ENCODE measurements at regions of chr2 and their contacts with region 1.

Region 1: DNA sequence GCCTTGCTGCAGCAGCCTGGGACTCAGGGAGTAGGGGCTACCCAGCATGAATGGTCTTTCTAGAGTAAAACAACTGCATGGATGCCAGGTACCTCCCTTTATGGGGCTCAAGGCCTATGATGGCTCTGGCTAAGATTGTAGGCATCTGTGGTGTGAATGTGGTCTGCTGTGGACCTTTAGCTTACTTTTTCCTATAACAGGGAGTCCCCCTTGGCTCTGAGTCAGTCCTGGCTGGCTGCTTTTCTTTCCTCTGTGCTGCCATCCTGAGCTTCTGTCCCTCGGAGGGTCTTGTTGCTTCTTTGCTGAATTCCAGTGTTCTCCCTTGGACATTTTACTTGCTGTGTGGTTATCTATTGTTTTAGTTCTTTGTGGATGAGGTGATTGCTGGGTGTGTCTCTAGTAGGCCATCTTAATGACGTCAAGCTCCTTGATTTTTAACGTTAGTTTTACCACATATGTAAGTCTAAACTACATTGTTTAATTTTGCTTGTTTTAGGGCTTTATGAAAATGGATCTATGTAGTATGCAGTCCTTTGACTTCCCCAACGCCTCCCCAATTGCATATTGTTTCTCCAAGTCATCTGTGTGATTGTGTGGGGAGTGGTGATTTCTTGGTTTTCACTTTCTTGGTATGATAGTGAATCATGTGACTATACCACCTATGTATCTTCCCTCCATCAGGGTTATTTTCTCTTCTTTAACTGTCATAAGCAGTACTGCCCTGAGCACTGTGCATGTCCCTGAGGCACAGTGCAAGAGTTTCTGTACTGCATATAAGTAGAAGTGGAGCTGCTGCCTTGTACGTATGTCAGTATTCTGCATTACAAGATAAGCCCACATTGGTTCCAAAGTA is 92.4 kb downstream of the NCK2 start:
- DNase-seq: no peak
- H3K4me3 Mint-ChIP-seq: peak overlapping the region; percentile 26
- H3K27ac Mint-ChIP-seq: peak overlapping the region; percentile 78
- H3K4me1 Mint-ChIP-seq: peaks cover 73% of the 10 kb centered on the region
- H3K27me3 Mint-ChIP-seq: no peaks in the 10 kb centered on the region

Region 2: GRCh38 chr2:105769504-105769903 is 67.6 kb before region 1 on chr2:
- intact Hi-C with region 1: loop called (anchors 1 kb)
- DNase-seq: no peak
- H3K4me3 Mint-ChIP-seq: peak overlapping the region; percentile 45
- H3K27ac Mint-ChIP-seq: peak overlapping the region; percentile 91
- H3K4me1 Mint-ChIP-seq: peaks cover 74% of the 10 kb centered on the region
- H3K27me3 Mint-ChIP-seq: no peaks in the 10 kb centered on the region

Region 3: DNA sequence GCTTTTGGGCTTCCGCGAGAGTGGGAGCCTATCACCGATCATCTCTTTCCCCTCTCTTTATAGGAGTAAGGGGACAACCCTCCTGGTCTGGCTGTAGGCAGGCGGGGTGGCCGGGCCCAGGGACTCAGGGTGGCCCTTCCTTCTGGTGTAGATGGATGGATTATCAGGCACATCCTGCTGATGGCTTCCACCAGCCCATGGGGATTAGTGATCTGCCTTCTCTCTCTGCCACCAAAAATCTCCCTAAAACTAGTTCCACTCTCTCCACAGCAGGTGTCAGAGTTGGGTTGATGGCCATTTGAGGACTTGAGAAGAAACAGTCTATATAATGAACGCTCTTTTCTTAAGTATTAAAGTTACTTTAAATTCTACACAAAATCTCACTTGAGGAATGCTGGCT is 54.9 kb before region 1 on chr2:
- intact Hi-C with region 1: no loop called
- DNase-seq: no peak
- H3K4me3 Mint-ChIP-seq: no peak overlapping the region
- H3K27ac Mint-ChIP-seq: peak overlapping the region; percentile 50
- H3K4me1 Mint-ChIP-seq: peaks cover 83% of the 10 kb centered on the region
- H3K27me3 Mint-ChIP-seq: no peaks in the 10 kb centered on the region

Region 4: DNA sequence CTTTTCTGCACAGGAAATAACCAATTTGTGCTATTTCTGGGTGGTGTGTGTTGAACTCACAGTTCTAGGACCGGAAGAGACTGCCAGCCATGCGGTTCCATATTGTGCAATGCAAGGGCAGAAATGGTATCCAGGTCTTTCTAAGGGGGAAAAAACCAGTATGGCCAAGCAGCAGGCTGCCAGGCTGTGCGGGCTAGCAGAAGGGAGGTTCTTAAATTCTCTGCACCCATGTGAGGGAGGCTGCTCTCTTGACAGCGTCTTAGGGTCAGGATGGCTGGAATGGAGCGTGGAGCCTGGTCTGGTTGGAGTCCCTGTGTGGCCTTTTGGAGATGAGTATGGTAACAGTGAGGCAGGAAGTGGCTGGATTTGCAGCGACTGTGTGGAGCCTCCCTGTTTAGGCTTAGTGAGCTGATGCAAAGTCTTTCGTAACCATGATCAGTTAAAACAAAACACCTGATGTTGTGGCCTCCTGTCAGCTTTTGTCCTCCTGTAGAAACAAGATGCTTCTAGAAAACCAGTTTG is 39.7 kb before region 1 on chr2:
- intact Hi-C with region 1: loop called (anchors 1 kb)
- DNase-seq: peak; percentile 48
- H3K4me3 Mint-ChIP-seq: peak overlapping the region; percentile 53
- H3K27ac Mint-ChIP-seq: peak overlapping the region; percentile 91
- H3K4me1 Mint-ChIP-seq: peaks cover 87% of the 10 kb centered on the region
- H3K27me3 Mint-ChIP-seq: no peaks in the 10 kb centered on the region

Region 5: GRCh38 chr2:105862843-105863242 is 25.8 kb after region 1 on chr2:
- intact Hi-C with region 1: no loop called
- DNase-seq: no peak
- H3K4me3 Mint-ChIP-seq: no peak overlapping the region
- H3K27ac Mint-ChIP-seq: peak overlapping the region; percentile 47
- H3K4me1 Mint-ChIP-seq: peaks cover 77% of the 10 kb centered on the region
- H3K27me3 Mint-ChIP-seq: no peaks in the 10 kb centered on the region

Region 6: GRCh38 chr2:105873721-105874120 is 36.7 kb after region 1 on chr2:
- intact Hi-C with region 1: loop called (anchors 1 kb)
- DNase-seq: peak; percentile 18
- H3K4me3 Mint-ChIP-seq: peak overlapping the region; percentile 34
- H3K27ac Mint-ChIP-seq: peak overlapping the region; percentile 91
- H3K4me1 Mint-ChIP-seq: peaks cover 73% of the 10 kb centered on the region
- H3K27me3 Mint-ChIP-seq: no peaks in the 10 kb centered on the region

Region 7: DNA sequence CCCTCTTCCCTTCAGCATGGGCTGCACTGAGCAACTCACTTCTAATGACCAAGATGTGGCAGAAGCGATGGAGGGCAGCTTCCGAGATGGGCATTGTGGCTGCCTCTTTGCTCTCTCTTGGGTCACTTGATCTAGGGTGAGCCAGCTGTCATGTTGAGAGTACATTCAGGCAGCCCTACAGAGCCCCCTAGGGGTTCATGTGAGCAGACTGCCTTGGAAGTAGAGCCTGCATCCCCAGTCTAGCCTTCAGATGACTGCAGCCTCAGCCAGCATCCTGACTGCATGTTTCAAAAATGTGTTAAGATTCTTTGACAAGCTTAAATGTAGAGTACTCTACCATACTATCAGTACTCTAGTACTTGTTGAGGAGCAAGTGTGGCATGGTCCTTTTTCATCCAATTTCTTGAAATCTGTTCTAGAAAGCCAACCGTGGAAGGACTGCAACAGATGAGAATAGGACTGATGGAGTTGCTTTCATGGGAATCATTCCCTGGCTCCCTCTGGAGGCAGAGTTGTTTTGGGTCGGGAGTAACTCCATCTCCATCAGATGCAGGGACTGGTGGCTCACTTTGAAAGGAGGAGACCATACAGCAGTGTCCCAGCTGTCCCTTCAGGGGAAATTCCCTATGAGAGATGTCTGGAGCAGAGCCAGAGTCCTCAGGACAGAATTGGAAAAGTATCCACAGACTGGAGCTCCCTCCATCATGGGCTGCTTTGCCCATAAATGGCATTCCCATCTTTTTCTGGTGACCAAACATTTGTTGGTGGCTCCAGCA is 51.7 kb after region 1 on chr2:
- intact Hi-C with region 1: loop called (anchors 1 kb)
- DNase-seq: no peak
- H3K4me3 Mint-ChIP-seq: no peak overlapping the region
- H3K27ac Mint-ChIP-seq: no peak overlapping the region
- H3K4me1 Mint-ChIP-seq: peaks cover 48% of the 10 kb centered on the region
- H3K27me3 Mint-ChIP-seq: no peaks in the 10 kb centered on the region

Region 8: DNA sequence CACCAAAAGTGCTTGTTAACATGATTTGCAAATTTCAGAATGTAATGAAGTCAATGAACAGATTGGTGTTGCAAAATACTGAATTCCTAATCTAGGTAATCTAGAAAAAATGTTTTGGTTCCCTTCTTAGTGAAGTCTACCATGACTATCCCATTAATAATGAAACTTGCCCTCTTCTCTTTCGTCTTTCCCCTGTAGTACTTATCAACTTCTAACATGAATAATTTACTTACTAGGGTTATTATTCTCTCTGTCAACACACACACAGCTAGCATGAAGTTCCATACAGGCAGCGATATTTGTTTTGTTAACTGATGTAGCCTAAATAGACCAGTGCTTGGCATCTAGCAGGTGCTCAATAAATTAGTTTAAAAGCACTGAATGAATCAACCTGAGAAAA is 67.9 kb after region 1 on chr2:
- intact Hi-C with region 1: loop called (anchors 2 kb)
- DNase-seq: no peak
- H3K4me3 Mint-ChIP-seq: no peak overlapping the region
- H3K27ac Mint-ChIP-seq: no peak overlapping the region
- H3K4me1 Mint-ChIP-seq: peaks cover 44% of the 10 kb centered on the region
- H3K27me3 Mint-ChIP-seq: no peaks in the 10 kb centered on the region

Measured in activated T-helper 2 cell treated with anti-CD3 and anti-CD28 coated beads, Interferon-gamma antibody, Interleukin-2, Interleukin-4, amounts not matched to agents 10 μg/mL and 5 μg/mL and 100 μg/mL, durations not matched to agents 14 hours and 24 hours and 36 hours (primary cell).